PC-3 (cell line): ENCODE measurements at regions of chr9 and their contacts with region 1.

Region 1: GRCh38 chr9:126914458-126915280 is at the start of gene RALGPS1:
- DNase-seq: peak; percentile 91
- ATAC-seq: peak; percentile 98
- H3K4me3 ChIP-seq: peak within 1 kb of the TSS; percentile 68
- H3K27ac ChIP-seq: no peak within 1 kb of the TSS
- H3K4me1 ChIP-seq: no peaks in the 10 kb centered on the region
- H3K27me3 ChIP-seq: no peaks in the 10 kb centered on the region
- CTCF ChIP-seq: no peak
- total RNA-seq, gene RALGPS1: 7.9 and 10.2 TPM in 2 replicates

Region 2: DNA sequence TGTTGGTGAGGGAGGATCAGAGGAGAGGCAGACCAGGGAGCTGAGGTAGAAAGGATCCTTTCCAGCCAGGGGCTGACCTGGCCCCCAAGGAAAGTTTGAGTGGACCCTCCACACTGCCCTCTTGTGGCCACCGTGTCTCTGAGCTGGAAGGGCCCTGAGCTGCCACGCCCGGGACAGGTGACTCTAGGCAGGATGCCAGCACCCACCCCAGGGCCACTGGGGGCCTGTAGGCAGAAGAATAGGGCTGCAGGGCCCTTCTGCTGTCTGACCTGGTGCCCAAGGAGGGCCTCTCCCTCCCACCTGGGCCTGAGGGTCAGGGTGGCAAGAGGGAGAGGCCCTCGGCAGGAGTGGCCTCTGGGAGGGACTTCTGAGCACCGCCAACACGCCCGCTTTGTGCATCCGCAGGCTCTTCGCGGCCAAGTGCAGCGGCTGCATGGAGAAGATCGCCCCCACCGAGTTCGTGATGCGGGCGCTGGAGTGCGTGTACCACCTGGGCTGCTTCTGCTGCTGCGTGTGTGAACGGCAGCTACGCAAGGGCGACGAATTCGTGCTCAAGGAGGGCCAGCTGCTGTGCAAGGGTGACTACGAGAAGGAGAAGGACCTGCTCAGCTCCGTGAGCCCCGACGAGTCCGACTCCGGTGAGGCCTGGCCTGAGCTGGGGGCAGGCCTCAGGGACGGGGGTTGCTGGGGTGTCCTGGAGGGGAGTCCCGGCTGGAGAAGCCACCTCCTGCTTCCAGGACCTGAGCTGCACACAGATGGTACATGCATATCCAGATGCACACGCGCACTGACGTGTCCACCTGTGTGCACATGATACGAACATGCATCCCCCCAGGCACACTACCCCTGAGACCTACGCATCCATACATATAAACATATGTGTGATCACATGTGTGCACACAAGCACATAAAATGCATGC is 224.0 kb before region 1 on chr9:
- CTCF ChIA-PET with region 1: no interaction called
- POLR2A ChIA-PET with region 1: no interaction called
- intact Hi-C with region 1: no loop called
- DNase-seq: peak; percentile 67
- ATAC-seq: peak; percentile 65
- H3K4me3 ChIP-seq: no peak overlapping the region
- H3K27ac ChIP-seq: no peak overlapping the region
- H3K4me1 ChIP-seq: no peaks in the 10 kb centered on the region
- H3K27me3 ChIP-seq: no peaks in the 10 kb centered on the region
- CTCF ChIP-seq: peak; percentile 69

Region 3: DNA sequence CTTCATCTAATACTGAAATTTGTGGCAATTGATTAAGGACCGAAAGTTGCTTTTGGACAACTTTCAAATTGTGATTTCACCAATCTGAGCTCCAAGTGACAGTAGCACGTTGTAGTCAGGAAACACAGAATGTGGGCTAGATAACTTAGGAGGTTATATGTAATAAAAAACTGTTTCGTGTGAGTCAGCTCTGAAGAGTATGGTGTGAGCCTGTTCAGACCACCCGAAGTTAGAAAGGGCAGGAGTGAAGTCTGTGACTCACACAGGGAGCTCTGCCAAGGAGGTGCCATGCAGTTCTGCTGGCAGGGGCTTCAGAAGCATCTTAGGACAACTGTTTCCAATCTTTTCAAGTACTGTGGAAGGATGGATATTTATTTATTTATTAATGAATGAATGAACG is 70.6 kb before region 1 on chr9:
- CTCF ChIA-PET with region 1: interaction called, 10 read pairs
- POLR2A ChIA-PET with region 1: no interaction called
- intact Hi-C with region 1: no loop called
- DNase-seq: peak; percentile 82
- ATAC-seq: peak; percentile 96
- H3K4me3 ChIP-seq: 0 out of 2 replicates have a peak overlapping the region, but pooled peaks have one; percentile 4
- H3K27ac ChIP-seq: peak overlapping the region; percentile 28; the same call in 1 of the 2 replicates
- H3K4me1 ChIP-seq: peaks cover 9% of the 10 kb centered on the region
- H3K27me3 ChIP-seq: no peaks in the 10 kb centered on the region
- CTCF ChIP-seq: no peak

Region 4: DNA sequence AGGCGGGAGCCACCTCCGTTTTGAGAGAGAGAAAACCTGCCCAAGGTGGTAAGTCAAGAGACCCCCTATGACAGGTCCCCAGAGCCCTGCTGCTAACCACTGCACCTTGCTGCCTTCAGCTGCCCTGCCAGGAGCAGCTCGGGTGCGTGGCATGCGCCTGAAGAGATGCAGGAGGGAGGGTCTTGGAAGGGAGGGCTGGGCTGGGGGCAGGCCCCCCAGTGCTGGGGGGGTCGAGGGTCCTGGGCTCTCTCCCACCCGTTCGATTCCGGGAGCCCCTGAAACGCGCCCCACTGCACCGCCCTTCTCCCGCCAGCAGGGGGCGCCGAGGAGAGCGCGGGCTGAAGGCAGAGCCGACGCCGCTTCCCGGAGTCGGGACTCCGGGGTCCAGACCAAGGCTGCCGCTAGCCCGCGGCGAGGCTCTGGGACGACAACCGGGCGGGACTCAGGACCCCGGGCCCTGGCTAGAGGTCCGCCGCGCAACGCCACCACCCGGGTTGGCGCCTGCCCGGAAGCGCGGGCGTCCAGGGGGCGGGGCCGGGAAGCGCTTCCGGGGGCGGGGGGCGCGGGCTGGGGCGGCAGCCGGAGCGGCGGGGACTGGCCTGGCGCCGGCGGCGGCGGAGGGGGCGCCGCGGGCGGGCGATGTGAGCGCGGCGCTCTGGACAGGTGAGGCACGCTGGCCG is 54.5 kb before region 1 on chr9 and contains the start of gene ZBTB34:
- CTCF ChIA-PET with region 1: no interaction called
- POLR2A ChIA-PET with region 1: no interaction called
- intact Hi-C with region 1: loop called (anchors 10 kb)
- DNase-seq: peak; percentile 47
- ATAC-seq: peak; percentile 64
- H3K4me3 ChIP-seq: peak within 1 kb of the TSS; percentile 87
- H3K27ac ChIP-seq: peak within 1 kb of the TSS; percentile 44
- H3K4me1 ChIP-seq: peaks cover 17% of the 10 kb centered on the region
- H3K27me3 ChIP-seq: no peaks in the 10 kb centered on the region
- CTCF ChIP-seq: peak; percentile 84
- total RNA-seq, gene ZBTB34: 1.6 and 1.8 TPM in 2 replicates